Heart left ventricle (tissue), 16 donors: ENCODE measurements at regions of chr12 and their contacts with region 1.

Region 1: DNA sequence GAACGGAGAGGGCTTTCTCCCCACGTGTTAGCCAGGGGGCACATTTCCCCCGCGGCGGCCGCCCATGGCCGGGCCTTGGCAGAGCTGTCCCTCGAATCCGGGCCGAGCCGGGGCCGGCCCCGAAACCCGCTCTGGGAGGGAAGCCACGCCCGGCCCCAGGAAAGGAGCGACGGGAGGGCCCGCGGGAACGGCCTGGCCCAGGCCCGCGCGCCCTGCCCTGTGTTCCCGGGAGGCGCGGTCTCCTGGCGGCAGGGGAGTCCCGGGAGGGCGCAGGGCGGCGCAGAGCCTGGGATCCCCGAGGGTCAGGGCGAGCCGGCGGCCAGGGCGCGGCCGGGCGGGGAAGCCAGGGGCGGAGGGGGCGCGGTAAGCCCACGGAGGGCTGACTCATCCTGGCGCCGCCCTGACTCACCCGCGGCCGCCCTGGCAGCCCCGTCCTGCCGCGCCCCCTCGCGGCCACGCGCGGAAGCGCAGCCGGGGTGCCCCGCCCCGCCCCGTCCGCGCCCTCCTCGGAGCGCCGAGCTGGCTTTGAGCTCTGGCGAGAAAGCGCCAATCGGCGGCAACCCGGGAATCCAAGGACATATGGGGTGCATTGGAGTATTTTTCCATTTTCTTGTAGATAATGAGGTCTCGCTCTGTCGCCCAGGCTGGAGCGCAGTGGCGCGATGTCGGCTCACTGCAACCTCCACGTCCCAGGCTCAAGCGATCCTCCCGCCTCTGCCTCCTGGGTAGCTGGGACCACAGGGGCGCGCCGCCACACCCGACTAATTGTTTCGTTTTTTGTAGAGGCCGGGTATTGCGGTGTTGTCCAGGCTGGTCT is 31.8 kb upstream of the PLEKHG6 start:
- DNase-seq: peak; percentile 87 to 92 (median 89)
- ATAC-seq: peak; percentile 76 to 94 (median 90)
- H3K4me3 ChIP-seq: peak overlapping the region; percentile 17 to 70 (median 59)
- H3K27ac ChIP-seq: peak overlapping the region; percentile 11 to 92 (median 84)
- H3K4me1 ChIP-seq: peaks cover 0 to 41% (median 32%) of the 10 kb centered on the region in 12 donors
- H3K27me3 ChIP-seq: no peaks in the 10 kb centered on the region
- CTCF ChIP-seq: peak; percentile 56 to 99 (median 92)
- POLR2A ChIP-seq: peak in 1 of 2 donors; percentile 37

Region 2: DNA sequence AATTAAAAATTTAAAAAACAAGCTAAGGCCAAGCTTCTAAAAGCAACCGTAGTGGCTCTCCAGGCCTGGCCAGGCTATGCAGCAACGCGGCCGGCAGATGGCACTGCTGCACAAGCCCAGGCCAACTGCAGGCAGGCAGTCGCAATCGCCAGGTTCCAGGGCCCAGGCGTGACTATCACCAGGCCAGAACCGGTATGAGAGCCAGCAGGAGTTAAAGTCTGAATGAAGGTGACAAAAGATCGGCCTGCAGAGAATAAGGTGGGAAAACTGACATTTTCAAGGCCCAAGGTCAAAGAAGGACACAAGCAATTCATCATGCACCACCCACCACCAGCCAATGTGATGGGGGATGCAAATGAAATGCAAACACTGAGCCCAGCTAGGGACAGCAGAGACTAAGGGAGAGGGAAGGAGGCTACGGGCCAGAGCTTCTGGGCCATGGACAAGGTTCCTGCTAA is 290.0 kb before region 1 on chr12:
- intact Hi-C with region 1: loop called in 6 of 10 experiments (anchors 2 to 10 kb)
- DNase-seq: peak; percentile 70 to 88 (median 78)
- ATAC-seq: peak; percentile 49 to 92 (median 88)
- H3K4me3 ChIP-seq: no peak overlapping the region
- H3K27ac ChIP-seq: peak overlapping the region in 1 of 12 donors; percentile 28
- H3K4me1 ChIP-seq: peaks cover 0 to 4% (median 0%) of the 10 kb centered on the region in 12 donors
- H3K27me3 ChIP-seq: no peaks in the 10 kb centered on the region
- CTCF ChIP-seq: peak; percentile 89 to 97 (median 92)
- POLR2A ChIP-seq: no peak

Region 3: DNA sequence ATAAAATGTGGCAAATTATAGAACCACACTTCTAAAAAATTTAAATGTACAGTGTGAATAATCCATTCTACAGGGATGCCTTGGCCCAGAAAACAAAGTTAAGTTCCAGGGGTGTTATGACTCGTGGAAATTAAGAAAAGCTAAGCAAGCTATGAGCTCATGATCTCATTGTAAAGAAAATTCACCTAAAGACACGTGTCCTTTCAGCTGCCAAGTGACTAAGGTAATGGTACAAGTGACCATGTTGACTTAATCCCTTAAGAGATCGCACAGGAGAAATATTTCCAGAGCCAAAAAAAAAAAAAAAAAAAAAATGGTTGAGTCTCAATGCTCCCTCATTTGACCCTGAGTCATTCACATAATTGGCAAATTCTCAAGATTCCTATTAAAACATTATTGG is 282.2 kb before region 1 on chr12:
- intact Hi-C with region 1: loop called in 1 of 10 experiments (anchors 5 kb)
- DNase-seq: no peak
- ATAC-seq: no peak
- H3K4me3 ChIP-seq: no peak overlapping the region
- H3K27ac ChIP-seq: no peak overlapping the region
- H3K4me1 ChIP-seq: no peaks in the 10 kb centered on the region
- H3K27me3 ChIP-seq: no peaks in the 10 kb centered on the region
- CTCF ChIP-seq: no peak
- POLR2A ChIP-seq: no peak

Region 4: GRCh38 chr12:6182116-6182898 is 96.3 kb before region 1 on chr12:
- intact Hi-C with region 1: loop called in 1 of 10 experiments (anchors 5 kb)
- DNase-seq: peak in 4 of 5 donors; percentile 68 to 75 (median 72)
- ATAC-seq: peak; percentile 41 to 81 (median 72)
- H3K4me3 ChIP-seq: no peak overlapping the region
- H3K27ac ChIP-seq: peak overlapping the region; percentile 52 to 88 (median 70)
- H3K4me1 ChIP-seq: peaks cover 5 to 53% (median 46%) of the 10 kb centered on the region in 12 donors
- H3K27me3 ChIP-seq: no peaks in the 10 kb centered on the region
- CTCF ChIP-seq: no peak
- POLR2A ChIP-seq: peak in 1 of 2 donors; percentile 30

Region 5: GRCh38 chr12:6230321-6231110 is 48.1 kb before region 1 on chr12:
- intact Hi-C with region 1: loop called in 7 of 10 experiments (anchors 2 to 5 kb)
- DNase-seq: peak; percentile 56 to 71 (median 61)
- ATAC-seq: peak in 2 of 4 donors; percentile 6 to 14
- H3K4me3 ChIP-seq: peak overlapping the region in 1 of 12 donors; percentile 1
- H3K27ac ChIP-seq: peak overlapping the region; percentile 67 to 96 (median 88)
- H3K4me1 ChIP-seq: peaks cover 35 to 100% (median 91%) of the 10 kb centered on the region in 12 donors
- H3K27me3 ChIP-seq: no peaks in the 10 kb centered on the region
- CTCF ChIP-seq: no peak
- POLR2A ChIP-seq: no peak